ENCODE measurements at regions of chrX and their contacts with region 1.

Region 1: GRCh38 chrX:41333744-41334259 is at the start of gene DDX3X:
- DNase-seq: peak; percentile 68 to 93 (median 82)
- ATAC-seq: peak; percentile 56
- H3K4me3 ChIP-seq: peak within 1 kb of the TSS; percentile 100
- H3K4me3 Mint-ChIP-seq: peak within 1 kb of the TSS; percentile 99
- H3K27ac ChIP-seq: peak within 1 kb of the TSS; percentile 98 to 100
- H3K27ac Mint-ChIP-seq: peak within 1 kb of the TSS; percentile 99
- H3K4me1 ChIP-seq: peaks cover 22% of the 10 kb centered on the region
- H3K4me1 Mint-ChIP-seq: peaks cover 35% of the 10 kb centered on the region
- H3K27me3 ChIP-seq: no peaks in the 10 kb centered on the region
- H3K27me3 Mint-ChIP-seq: peaks cover 4% of the 10 kb centered on the region
- CTCF ChIP-seq: no peak
- total RNA-seq, gene DDX3X: 610 to 653 TPM

Region 2: DNA sequence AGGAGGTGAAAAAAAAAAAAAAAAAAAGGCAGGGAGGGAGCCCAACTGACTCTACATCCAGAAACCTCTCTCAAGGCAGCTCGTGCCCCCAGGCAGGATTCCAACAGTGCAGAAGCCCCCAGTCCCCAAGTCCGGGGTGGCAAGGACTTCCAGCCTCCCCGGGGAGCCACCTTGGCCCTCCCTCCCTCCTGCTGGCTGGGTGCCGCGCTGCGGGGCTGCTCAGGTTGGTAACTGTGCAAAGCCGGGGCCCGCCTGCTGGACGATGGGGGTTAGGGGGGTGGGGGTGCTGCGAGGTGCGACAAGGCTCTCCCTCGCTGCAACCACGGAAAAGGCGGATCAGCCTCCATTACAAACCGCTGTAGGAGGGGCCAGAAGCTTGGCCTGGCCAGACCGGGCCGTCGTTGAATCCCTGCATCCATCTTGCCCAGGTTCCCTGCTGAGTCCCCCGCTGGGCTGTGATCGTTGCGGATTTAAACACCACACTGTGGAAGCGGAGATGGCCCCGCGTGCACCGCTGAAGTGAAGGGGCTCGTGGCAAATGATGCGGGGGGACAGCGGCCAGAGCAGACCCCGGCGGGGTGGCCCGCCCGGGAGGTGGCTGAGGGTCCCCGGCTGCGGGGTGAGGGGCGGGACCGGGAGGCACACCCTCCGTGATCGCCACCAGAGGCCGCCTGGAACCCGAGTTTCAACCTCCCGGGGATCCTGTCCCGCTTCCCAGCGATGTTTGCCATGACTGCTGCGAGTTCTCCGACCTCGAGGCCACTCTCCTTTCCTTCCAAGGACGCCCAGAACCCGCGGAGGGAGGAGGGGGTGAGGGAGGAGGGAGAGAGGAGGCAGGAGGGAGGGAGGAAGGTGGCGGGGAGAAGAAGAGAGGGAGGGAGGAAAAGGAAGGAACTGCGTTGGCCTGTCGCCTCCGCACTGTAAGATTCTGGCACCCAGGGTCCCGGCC is 57.9 kb before region 1 on chrX:
- CTCF ChIA-PET with region 1: no interaction called
- POLR2A ChIA-PET with region 1: interaction called, 8 read pairs
- intact Hi-C with region 1: loop called (anchors 5 kb)
- DNase-seq: peak in 13 of 14 experiments; percentile 14 to 77 (median 47)
- ATAC-seq: peak; percentile 71
- H3K4me3 ChIP-seq: peak overlapping the region; percentile 58
- H3K4me3 Mint-ChIP-seq: peak overlapping the region; percentile 78
- H3K27ac ChIP-seq: no peak overlapping the region
- H3K27ac Mint-ChIP-seq: peak overlapping the region; percentile 44
- H3K4me1 ChIP-seq: peaks cover 14% of the 10 kb centered on the region
- H3K4me1 Mint-ChIP-seq: no peaks in the 10 kb centered on the region
- H3K27me3 ChIP-seq: no peaks in the 10 kb centered on the region
- H3K27me3 Mint-ChIP-seq: no peaks in the 10 kb centered on the region
- CTCF ChIP-seq: peak; percentile 14

Region 3: GRCh38 chrX:41293269-41293668 is 40.5 kb before region 1 on chrX:
- CTCF ChIA-PET with region 1: no interaction called
- POLR2A ChIA-PET with region 1: no interaction called
- intact Hi-C with region 1: no loop called
- DNase-seq: peak in 3 of 14 experiments; percentile 11 to 29 (median 19)
- ATAC-seq: no peak
- H3K4me3 ChIP-seq: no peak overlapping the region
- H3K4me3 Mint-ChIP-seq: no peak overlapping the region
- H3K27ac ChIP-seq: no peak overlapping the region
- H3K27ac Mint-ChIP-seq: no peak overlapping the region
- H3K4me1 ChIP-seq: no peaks in the 10 kb centered on the region
- H3K4me1 Mint-ChIP-seq: no peaks in the 10 kb centered on the region
- H3K27me3 ChIP-seq: no peaks in the 10 kb centered on the region
- H3K27me3 Mint-ChIP-seq: no peaks in the 10 kb centered on the region
- CTCF ChIP-seq: no peak

Region 4: DNA sequence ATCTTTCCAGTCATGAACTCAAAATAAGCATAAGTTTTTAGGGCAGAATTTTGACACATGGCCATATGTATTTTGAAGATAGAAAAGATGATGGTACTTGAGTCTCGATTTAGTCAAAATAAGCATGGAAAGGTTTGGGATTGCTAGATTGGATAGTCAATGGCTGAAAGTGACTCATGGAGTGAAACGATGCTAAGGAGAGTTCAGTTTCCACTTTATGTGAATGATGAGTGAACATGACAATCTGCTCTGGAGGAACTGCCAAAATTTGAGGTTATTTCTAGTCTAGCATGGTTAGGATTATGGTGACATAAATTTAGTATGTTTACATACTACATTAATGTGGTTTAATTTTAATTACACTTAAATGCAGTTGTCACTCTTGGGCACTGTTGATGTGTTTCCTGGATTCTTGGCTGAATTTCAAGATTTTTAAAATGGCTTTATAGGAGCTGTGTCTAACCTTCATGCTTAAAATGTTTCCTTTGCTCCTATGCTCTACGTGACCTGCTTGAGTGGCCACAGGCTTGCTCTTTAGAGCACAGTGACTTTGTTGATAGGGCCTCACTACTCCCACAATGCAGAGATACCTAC is 17.3 kb after region 1 on chrX:
- CTCF ChIA-PET with region 1: no interaction called
- POLR2A ChIA-PET with region 1: interaction called, 10 read pairs
- intact Hi-C with region 1: loop called in 1 of 2 experiments (anchors 2 kb)
- DNase-seq: peak in 1 of 14 experiments; percentile 27
- ATAC-seq: peak; percentile 17
- H3K4me3 ChIP-seq: no peak overlapping the region
- H3K4me3 Mint-ChIP-seq: peak overlapping the region; percentile 0
- H3K27ac ChIP-seq: no peak overlapping the region
- H3K27ac Mint-ChIP-seq: peak overlapping the region; percentile 59
- H3K4me1 ChIP-seq: peaks cover 10% of the 10 kb centered on the region
- H3K4me1 Mint-ChIP-seq: peaks cover 43% of the 10 kb centered on the region
- H3K27me3 ChIP-seq: no peaks in the 10 kb centered on the region
- H3K27me3 Mint-ChIP-seq: no peaks in the 10 kb centered on the region
- CTCF ChIP-seq: no peak

Region 5: DNA sequence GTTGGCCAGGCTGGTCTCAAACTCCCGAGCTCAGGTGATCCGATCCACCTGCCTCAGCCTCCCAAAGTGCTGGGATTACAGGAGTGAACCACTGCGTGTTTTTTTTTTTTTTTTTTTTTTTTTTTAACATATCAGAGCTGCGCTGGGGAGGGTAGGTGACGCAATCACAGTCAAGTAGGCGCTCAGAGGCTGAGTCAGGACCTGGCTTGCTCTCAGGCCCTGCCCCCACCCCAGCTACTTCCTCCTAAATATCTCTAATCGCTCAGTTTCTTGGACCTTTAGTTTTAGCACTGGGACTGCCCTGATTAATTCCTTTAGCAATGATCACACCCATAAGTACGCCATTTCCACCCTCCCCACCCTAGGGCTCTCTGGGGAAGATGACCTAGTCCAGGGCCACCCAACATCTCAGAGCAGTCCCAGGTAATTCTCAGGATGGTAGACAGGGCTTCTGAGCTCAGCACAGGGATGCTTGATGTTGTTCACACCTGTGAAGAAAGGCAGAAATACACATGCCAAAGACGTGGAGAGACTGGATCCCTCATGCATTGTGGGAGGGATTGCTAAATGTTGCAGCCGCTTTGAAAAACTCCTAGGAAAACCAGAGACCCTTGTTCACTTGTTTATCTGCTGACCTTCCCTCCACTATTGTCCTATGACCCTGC is 50.4 kb after region 1 on chrX:
- CTCF ChIA-PET with region 1: no interaction called
- POLR2A ChIA-PET with region 1: interaction called, 15 read pairs
- intact Hi-C with region 1: loop called in 1 of 2 experiments (anchors 5 kb)
- DNase-seq: peak; percentile 10 to 83 (median 46)
- ATAC-seq: peak; percentile 70
- H3K4me3 ChIP-seq: peak overlapping the region; percentile 42
- H3K4me3 Mint-ChIP-seq: no peak overlapping the region
- H3K27ac ChIP-seq: peak overlapping the region in 1 of 2 donors; percentile 34
- H3K27ac Mint-ChIP-seq: peak overlapping the region; percentile 90
- H3K4me1 ChIP-seq: peaks cover 19% of the 10 kb centered on the region
- H3K4me1 Mint-ChIP-seq: peaks cover 17% of the 10 kb centered on the region
- H3K27me3 ChIP-seq: no peaks in the 10 kb centered on the region
- H3K27me3 Mint-ChIP-seq: no peaks in the 10 kb centered on the region
- CTCF ChIP-seq: no peak

Region 6: DNA sequence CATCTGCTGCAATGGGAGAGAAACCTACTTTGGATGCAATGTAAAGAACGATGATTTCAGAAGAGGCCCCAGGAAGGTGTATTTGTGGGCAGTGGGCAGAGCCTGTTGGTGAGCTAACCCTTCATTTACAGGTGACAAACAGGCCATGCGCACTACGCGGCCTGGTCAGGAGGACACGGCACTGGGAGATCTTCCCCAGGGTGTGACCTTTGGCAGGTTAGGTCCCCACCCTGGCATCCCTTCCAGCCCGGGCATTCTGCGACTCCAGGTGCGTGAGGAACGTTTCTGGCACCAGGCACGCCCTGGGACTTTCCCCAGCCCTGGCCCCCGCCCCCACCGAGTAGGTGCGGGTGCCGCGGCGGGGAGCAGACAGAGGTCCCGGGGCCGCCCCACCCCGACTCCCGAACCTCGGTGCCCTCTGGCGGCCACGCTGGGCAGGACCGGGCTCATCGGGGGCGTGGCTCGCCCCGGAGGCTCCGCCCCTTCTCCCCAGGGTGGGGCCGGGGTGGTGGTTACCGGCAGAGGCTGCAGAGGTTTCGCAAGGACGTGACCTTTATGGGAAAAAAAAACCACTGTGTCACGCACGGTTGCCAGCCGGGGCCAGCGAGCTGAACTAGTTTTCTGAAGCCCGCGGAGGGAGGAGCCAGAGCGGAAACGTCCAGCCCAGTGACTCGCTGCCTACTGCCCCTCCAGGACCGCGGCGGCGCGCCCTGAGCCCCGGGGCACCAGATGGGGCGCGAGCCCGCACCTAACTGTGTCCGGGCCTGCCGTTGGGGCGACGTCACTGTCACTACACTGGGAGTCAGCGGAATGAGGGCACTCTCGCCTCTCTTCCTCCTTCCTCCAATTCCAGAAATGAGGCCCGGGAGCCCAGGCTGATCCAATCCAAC is 108.4 kb after region 1 on chrX:
- CTCF ChIA-PET with region 1: interaction called, 5 read pairs
- POLR2A ChIA-PET with region 1: interaction called, 3 read pairs
- intact Hi-C with region 1: loop called (anchors 1 to 5 kb)
- DNase-seq: peak; percentile 69 to 92 (median 82)
- ATAC-seq: peak; percentile 96
- H3K4me3 ChIP-seq: peak overlapping the region; percentile 52
- H3K4me3 Mint-ChIP-seq: peak overlapping the region; percentile 32
- H3K27ac ChIP-seq: no peak overlapping the region
- H3K27ac Mint-ChIP-seq: no peak overlapping the region
- H3K4me1 ChIP-seq: peaks cover 13% of the 10 kb centered on the region
- H3K4me1 Mint-ChIP-seq: no peaks in the 10 kb centered on the region
- H3K27me3 ChIP-seq: no peaks in the 10 kb centered on the region
- H3K27me3 Mint-ChIP-seq: no peaks in the 10 kb centered on the region
- CTCF ChIP-seq: peak; percentile 62

Region 7: GRCh38 chrX:41923257-41923969 is 589.6 kb after region 1 on chrX and contains the start of gene CASK:
- CTCF ChIA-PET with region 1: no interaction called
- POLR2A ChIA-PET with region 1: no interaction called
- intact Hi-C with region 1: loop called in 1 of 2 experiments (anchors 10 kb)
- DNase-seq: peak; percentile 73 to 96 (median 87)
- ATAC-seq: peak; percentile 86
- H3K4me3 ChIP-seq: peak within 1 kb of the TSS; percentile 84
- H3K4me3 Mint-ChIP-seq: peak within 1 kb of the TSS; percentile 94
- H3K27ac ChIP-seq: peak within 1 kb of the TSS; percentile 52 to 68
- H3K27ac Mint-ChIP-seq: peak within 1 kb of the TSS; percentile 91
- H3K4me1 ChIP-seq: peaks cover 3% of the 10 kb centered on the region
- H3K4me1 Mint-ChIP-seq: peaks cover 44% of the 10 kb centered on the region
- H3K27me3 ChIP-seq: no peaks in the 10 kb centered on the region
- H3K27me3 Mint-ChIP-seq: no peaks in the 10 kb centered on the region
- CTCF ChIP-seq: no peak
- total RNA-seq, gene CASK: 39.9 to 44.6 TPM

Measured in CD4-positive, alpha-beta T cell (primary cell).